ENCODE measurements at regions of chr13 and their contacts with region 1.

Region 1: DNA sequence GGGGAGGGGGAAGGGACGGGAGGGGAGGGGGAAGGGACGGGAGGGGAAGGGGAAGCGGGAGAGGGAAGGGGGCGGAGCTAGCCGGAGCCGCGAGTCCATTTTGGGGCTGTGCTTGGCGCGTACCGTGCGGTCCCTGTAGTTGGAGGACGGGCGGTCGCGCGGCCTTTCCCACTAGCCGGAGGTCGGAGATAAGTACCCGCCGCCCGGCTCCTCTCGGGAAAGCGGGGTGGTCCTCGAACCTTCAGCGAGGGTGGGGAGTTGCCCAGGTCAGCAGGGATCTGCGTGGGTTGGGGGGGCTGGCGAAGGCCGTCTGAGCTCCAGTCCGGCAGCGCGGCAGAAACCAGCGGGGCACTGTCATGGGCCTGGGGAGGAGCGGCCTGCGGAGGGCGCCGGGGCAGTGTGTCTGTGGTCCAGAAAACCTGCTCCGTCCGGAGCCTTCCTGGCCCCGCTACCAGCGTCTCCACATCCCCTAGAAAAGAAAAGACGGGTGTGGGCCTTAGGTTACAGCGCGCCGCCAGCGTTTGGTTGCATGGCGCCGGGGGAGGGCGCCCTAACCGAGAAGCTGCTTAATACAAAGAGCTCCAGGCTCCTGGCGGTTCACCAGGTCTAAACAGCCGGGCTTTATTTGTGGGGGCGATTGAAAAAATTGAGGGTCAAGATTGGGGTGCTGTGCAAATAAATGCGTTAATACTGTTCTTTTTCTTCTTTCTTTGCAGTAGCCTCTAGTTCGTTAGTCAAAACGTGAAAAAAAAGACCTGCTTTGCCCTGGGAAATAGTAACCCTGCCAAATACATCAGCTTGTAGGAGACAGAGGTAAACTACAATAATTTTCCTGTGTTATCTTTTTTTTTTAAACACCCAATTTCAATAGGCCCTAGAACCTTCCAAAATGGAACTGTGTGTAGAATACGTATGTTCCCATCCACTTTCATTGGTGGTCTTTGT is at the start of gene TRIM13:
- DNase-seq: peak; percentile 84 to 93 (median 90)
- H3K4me3 ChIP-seq: peak within 1 kb of the TSS; percentile 69 to 98 (median 87)
- H3K27ac ChIP-seq: peak within 1 kb of the TSS; percentile 91 to 100 (median 99)
- H3K27me3 ChIP-seq: no peaks in the 10 kb centered on the region
- CTCF ChIP-seq: peak; percentile 51 to 92 (median 82)
- total RNA-seq, gene TRIM13: 17.3 to 34.5 (median 23.6) TPM

Region 2: GRCh38 chr13:49810567-49811526 is 186.4 kb before region 1 on chr13:
- intact Hi-C with region 1: no loop called
- DNase-seq: no peak
- H3K4me3 ChIP-seq: no peak overlapping the region
- H3K27ac ChIP-seq: no peak overlapping the region
- H3K27me3 ChIP-seq: peaks cover 0 to 4% (median 0%) of the 10 kb centered on the region in 45 donors
- CTCF ChIP-seq: no peak

Region 3: GRCh38 chr13:49936085-49936940 is 60.9 kb before region 1 on chr13 and contains the start of gene SPRYD7:
- intact Hi-C with region 1: loop called (anchors 2 to 5 kb)
- DNase-seq: peak; percentile 96 to 99 (median 98)
- H3K4me3 ChIP-seq: peak within 1 kb of the TSS; percentile 56 to 97 (median 86)
- H3K27ac ChIP-seq: peak within 1 kb of the TSS in 58 of 59 donors; percentile 50 to 94 (median 88)
- H3K27me3 ChIP-seq: no peaks in the 10 kb centered on the region
- CTCF ChIP-seq: peak; percentile 68 to 99 (median 92)
- total RNA-seq, gene SPRYD7: 11.6 to 33.4 (median 22.1) TPM

Region 4: DNA sequence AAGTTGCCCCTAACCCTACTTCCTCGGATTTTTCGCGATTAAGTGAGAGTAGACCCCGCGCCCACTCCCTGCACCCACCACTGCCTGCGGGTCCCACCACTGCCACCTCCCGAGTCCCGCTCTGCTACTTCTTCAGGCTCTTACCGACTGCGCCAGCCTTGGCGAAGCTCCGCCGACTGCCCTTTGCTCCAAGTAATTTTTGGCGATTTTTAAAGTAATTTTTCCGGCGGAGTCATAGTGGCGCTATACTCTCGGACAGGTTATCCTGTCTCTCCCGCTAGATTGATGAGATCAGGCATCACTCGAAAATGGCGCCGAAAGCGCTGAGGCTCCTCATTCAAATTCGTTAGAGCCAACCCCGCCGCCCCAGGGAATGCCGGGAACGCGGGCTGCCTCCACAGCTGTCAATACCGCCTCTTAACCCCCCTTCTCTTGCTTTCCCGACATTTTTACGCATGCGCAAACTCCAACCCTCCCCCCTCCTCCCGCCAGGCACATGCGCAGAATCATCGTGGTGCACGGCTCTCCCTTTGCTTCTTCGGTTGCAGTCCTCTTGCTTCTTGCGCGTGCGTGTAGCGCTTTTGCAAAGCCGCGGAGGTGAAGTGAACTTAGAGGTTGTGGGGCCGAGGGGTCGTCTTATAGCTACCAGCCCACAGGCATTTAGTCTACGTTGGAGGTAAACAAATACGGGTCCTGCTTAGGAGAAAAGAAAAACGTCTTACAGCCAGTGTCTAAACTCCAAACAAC is 84.6 kb after region 1 on chr13:
- intact Hi-C with region 1: loop called (anchors 1 to 2 kb)
- DNase-seq: peak; percentile 96 to 99 (median 98)
- H3K4me3 ChIP-seq: peak overlapping the region; percentile 61 to 91 (median 79)
- H3K27ac ChIP-seq: peak overlapping the region; percentile 63 to 94 (median 86)
- H3K27me3 ChIP-seq: no peaks in the 10 kb centered on the region
- CTCF ChIP-seq: peak in 35 of 56 donors; percentile 9 to 50 (median 28)

Region 5: GRCh38 chr13:50387051-50387581 is 389.9 kb after region 1 on chr13:
- intact Hi-C with region 1: loop called in 1 of 2 experiments (anchors 10 kb)
- DNase-seq: peak in 5 of 10 donors; percentile 15 to 58 (median 36)
- H3K4me3 ChIP-seq: peak overlapping the region in 38 of 59 donors; percentile 3 to 47 (median 24)
- H3K27ac ChIP-seq: peak overlapping the region in 56 of 59 donors; percentile 4 to 88 (median 74)
- H3K27me3 ChIP-seq: no peaks in the 10 kb centered on the region
- CTCF ChIP-seq: peak in 39 of 56 donors; percentile 10 to 58 (median 33)

Region 6: DNA sequence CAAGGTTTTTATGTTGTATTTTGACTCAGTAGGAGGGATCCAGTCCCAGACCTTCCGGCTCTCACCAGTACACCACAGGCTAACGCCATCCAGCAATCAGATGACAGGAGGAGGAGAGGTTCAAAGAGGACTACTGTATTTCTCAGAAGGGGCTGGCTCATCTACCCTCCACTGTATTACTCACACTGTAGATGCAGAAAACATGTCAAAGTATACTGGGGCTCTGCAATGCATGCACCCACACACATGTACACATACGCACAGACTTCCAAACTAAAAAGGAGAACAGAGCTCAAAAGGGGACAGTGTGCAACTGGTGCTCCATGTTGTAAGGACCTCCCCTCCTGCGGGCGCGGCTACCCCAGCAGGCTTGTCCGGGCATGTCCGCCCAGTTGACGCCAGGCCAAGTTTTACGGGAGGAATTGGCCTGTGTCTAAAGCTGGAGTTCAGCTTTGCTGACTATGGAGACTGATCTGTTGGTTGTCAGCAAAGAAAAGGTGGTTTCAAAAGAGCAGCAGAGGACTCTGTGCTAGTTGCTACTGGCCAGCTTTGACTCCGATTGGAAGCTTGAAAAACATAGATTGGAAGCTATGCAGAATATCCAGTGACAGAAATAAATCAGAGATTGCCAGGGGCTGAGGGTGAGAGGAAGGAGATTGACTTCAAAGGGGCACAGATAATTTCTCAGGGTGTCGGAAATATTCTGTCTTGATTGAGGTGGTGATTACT is 532.1 kb after region 1 on chr13:
- intact Hi-C with region 1: loop called (anchors 5 kb)
- DNase-seq: peak; percentile 41 to 73 (median 70)
- H3K4me3 ChIP-seq: peak overlapping the region in 51 of 59 donors; percentile 6 to 58 (median 33)
- H3K27ac ChIP-seq: peak overlapping the region; percentile 0 to 93 (median 76)
- H3K27me3 ChIP-seq: no peaks in the 10 kb centered on the region
- CTCF ChIP-seq: peak in 6 of 56 donors; percentile 9 to 34 (median 17)

Region 7: GRCh38 chr13:50911937-50912795 is 914.9 kb after region 1 on chr13:
- intact Hi-C with region 1: loop called in 1 of 2 experiments (anchors 5 kb)
- DNase-seq: peak; percentile 80 to 93 (median 86)
- H3K4me3 ChIP-seq: peak overlapping the region in 20 of 59 donors; percentile 1 to 92 (median 82)
- H3K27ac ChIP-seq: peak overlapping the region in 1 of 59 donors; percentile 15
- H3K27me3 ChIP-seq: no peaks in the 10 kb centered on the region
- CTCF ChIP-seq: peak; percentile 63 to 95 (median 89)

Measured in dorsolateral prefrontal cortex (tissue), 120 donors.